Right cardiac atrium (tissue), 5 donors: ENCODE measurements at regions of chr11 and their contacts with region 1.

Region 1: GRCh38 chr11:56776809-56777208 is 28.3 kb upstream of the OR9G4 start:
- DNase-seq: no peak
- ATAC-seq: no peak
- H3K4me3 ChIP-seq: no peak overlapping the region
- H3K27ac ChIP-seq: no peak overlapping the region
- H3K4me1 ChIP-seq: no peaks in the 10 kb centered on the region
- H3K27me3 ChIP-seq: no peaks in the 10 kb centered on the region

Region 2: GRCh38 chr11:56624661-56625110 is 152.1 kb before region 1 on chr11:
- intact Hi-C with region 1: loop called in 1 of 4 experiments (anchors 10 kb)
- DNase-seq: no peak
- ATAC-seq: peak; percentile 36 to 56
- H3K4me3 ChIP-seq: no peak overlapping the region
- H3K27ac ChIP-seq: no peak overlapping the region
- H3K4me1 ChIP-seq: no peaks in the 10 kb centered on the region
- H3K27me3 ChIP-seq: no peaks in the 10 kb centered on the region

Region 3: GRCh38 chr11:56950510-56950909 is 173.7 kb after region 1 on chr11:
- intact Hi-C with region 1: no loop called
- DNase-seq: no peak
- ATAC-seq: no peak
- H3K4me3 ChIP-seq: no peak overlapping the region
- H3K27ac ChIP-seq: no peak overlapping the region
- H3K4me1 ChIP-seq: no peaks in the 10 kb centered on the region
- H3K27me3 ChIP-seq: no peaks in the 10 kb centered on the region